ENCODE measurements at regions of chr15 and their contacts with region 1.

Region 1: GRCh38 chr15:52735231-52736089 is 54.7 kb downstream of the ONECUT1 start:
- DNase-seq: peak; percentile 77
- H3K4me3 ChIP-seq: no peak overlapping the region
- H3K27ac ChIP-seq: no peak overlapping the region
- H3K4me1 ChIP-seq: no peaks in the 10 kb centered on the region
- H3K27me3 ChIP-seq: no peaks in the 10 kb centered on the region
- CTCF ChIP-seq: peak; percentile 76

Region 2: GRCh38 chr15:52256366-52256765 is 479.1 kb before region 1 on chr15:
- intact Hi-C with region 1: loop called (anchors 5 kb)
- DNase-seq: peak; percentile 80
- H3K4me3 ChIP-seq: no peak overlapping the region
- H3K27ac ChIP-seq: no peak overlapping the region
- H3K4me1 ChIP-seq: no peaks in the 10 kb centered on the region
- H3K27me3 ChIP-seq: no peaks in the 10 kb centered on the region
- CTCF ChIP-seq: peak; percentile 55

Region 3: GRCh38 chr15:52326756-52327155 is 408.7 kb before region 1 on chr15:
- intact Hi-C with region 1: loop called (anchors 5 kb)
- DNase-seq: no peak
- H3K4me3 ChIP-seq: no peak overlapping the region
- H3K27ac ChIP-seq: no peak overlapping the region
- H3K4me1 ChIP-seq: no peaks in the 10 kb centered on the region
- H3K27me3 ChIP-seq: no peaks in the 10 kb centered on the region
- CTCF ChIP-seq: no peak

Region 4: GRCh38 chr15:52528991-52529926 is 206.2 kb before region 1 on chr15:
- intact Hi-C with region 1: loop called (anchors 10 kb)
- DNase-seq: peak; percentile 54
- H3K4me3 ChIP-seq: peak overlapping the region; percentile 69
- H3K27ac ChIP-seq: peak overlapping the region; percentile 52
- H3K4me1 ChIP-seq: peaks cover 3% of the 10 kb centered on the region
- H3K27me3 ChIP-seq: peaks cover 31% of the 10 kb centered on the region
- CTCF ChIP-seq: no peak

Measured in colonic mucosa (tissue), 4 donors.